Calu3 (cell line): ENCODE measurements at regions of chr1 and their contacts with region 1.

Region 1: DNA sequence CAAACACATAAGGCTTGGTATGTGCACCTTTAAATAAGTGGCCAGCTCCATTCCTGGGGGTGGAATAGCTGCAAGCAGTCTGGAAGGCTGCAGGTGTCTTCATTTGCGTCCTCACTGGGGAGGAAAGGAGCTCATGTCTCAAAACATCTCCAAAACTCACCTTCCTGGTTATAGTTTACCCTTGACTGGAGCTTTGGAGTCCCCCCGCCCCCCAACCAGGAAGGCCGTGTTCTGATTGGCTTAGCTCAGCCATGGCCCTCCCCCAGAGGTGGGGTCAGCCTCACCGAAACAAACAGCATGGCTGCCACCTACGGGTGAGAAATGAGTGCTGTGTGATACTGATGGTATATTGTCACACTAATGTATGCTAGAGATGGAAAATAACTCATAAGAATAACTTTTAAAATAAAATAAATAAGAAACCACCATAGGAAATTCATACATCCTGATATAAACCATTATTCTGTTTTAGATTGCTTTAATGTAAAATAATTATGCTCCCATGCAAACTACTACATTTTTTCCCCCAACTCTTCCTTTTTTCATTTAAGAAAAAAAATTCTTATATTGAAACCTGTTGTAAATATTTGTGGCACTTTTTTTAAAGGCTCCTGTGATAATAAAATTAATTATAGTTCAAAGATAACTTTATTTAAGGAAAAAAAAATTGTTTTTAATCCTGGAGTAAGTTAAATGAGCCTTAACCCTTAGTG is 90.8 kb downstream of the ZP4 start:
- DNase-seq: peak; percentile 94
- H3K4me3 Mint-ChIP-seq: no peak overlapping the region
- H3K27ac Mint-ChIP-seq: no peak overlapping the region
- H3K4me1 Mint-ChIP-seq: peaks cover 6% of the 10 kb centered on the region
- H3K27me3 Mint-ChIP-seq: peaks cover 8% of the 10 kb centered on the region
- CTCF ChIP-seq: peak; percentile 74

Region 2: DNA sequence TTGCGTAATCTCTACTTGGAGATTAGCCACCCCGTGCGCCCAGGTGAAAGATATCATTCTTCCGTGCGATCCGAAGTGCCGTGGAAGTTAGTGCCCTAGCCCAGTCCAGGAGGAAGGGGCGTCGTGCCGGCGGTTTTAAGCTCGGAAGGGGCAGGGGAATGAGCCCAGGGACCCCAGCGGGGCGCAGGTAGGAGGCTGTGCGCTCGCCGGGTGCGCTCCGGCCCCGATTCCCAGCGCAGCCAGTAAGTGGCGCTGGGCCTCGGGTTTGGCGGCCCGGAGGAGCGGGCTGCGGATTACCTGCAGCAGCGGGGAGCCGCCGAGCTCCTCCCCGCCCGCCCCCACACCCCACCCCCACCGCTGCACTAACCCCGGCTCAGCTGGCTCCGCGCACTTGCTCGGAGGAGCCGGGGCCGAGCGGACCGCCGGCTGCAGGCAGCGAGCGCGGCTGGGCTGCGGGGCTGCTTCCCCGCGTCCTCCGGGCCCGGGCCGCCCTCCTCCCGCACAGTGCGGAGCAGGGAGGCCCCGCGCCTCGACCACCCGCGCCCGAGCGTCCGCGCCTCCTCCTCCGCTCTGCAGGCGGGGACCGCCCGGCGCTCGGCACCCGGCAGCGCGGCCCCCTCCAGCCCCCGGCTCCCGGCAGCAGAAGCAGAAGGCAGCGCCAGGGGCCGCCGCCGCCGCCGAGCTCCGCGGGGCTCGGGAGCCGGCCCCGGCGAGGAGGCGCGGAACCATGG is 758.0 kb before region 1 on chr1 and contains the start of gene RYR2:
- CTCF ChIA-PET with region 1: interaction called, 12 read pairs
- intact Hi-C with region 1: no loop called
- DNase-seq: no peak
- H3K4me3 Mint-ChIP-seq: no peak within 1 kb of the TSS
- H3K27ac Mint-ChIP-seq: no peak within 1 kb of the TSS
- H3K4me1 Mint-ChIP-seq: no peaks in the 10 kb centered on the region
- H3K27me3 Mint-ChIP-seq: no peaks in the 10 kb centered on the region
- CTCF ChIP-seq: no peak
- total RNA-seq, gene RYR2: 0.32 and 0.90 TPM in 2 replicates

Region 3: DNA sequence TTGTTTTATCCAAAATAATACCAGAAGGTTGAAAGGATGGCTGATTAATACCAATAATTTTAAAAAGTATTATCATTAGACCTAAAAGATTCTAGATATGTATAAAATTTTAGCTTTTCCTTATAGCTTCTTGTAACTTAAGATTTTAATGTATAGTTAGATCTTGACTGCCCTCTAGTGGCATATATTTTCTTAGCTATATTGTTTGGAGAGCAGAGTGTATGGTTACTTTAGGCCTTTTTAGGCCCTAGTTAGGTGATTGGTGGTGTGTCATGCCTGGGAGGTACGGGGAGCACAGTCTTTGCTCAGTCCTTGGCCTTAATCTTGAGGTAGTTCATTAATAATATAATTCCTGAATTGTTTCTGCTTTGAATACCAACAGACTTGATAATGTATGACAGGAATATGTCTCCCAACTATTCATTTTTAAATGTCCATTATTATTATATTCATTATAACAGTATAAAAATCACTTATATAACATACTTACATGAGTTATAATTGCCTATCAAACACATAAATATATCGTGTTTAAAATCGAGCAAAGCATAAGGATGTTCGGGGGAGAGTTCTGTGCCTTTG is 237.6 kb before region 1 on chr1:
- CTCF ChIA-PET with region 1: interaction called, 8 read pairs
- intact Hi-C with region 1: loop called (anchors 10 kb)
- DNase-seq: peak; percentile 18
- H3K4me3 Mint-ChIP-seq: no peak overlapping the region
- H3K27ac Mint-ChIP-seq: no peak overlapping the region
- H3K4me1 Mint-ChIP-seq: no peaks in the 10 kb centered on the region
- H3K27me3 Mint-ChIP-seq: no peaks in the 10 kb centered on the region
- CTCF ChIP-seq: peak; percentile 76

Region 4: GRCh38 chr1:237672748-237673147 is 127.2 kb before region 1 on chr1:
- CTCF ChIA-PET with region 1: interaction called, 12 read pairs
- intact Hi-C with region 1: loop called (anchors 1 kb)
- DNase-seq: peak; percentile 47
- H3K4me3 Mint-ChIP-seq: no peak overlapping the region
- H3K27ac Mint-ChIP-seq: no peak overlapping the region
- H3K4me1 Mint-ChIP-seq: peaks cover 19% of the 10 kb centered on the region
- H3K27me3 Mint-ChIP-seq: no peaks in the 10 kb centered on the region
- CTCF ChIP-seq: peak; percentile 43

Region 5: GRCh38 chr1:237677979-237678378 is 121.9 kb before region 1 on chr1:
- CTCF ChIA-PET with region 1: interaction called, 12 read pairs
- intact Hi-C with region 1: loop called (anchors 1 kb)
- DNase-seq: peak; percentile 8
- H3K4me3 Mint-ChIP-seq: no peak overlapping the region
- H3K27ac Mint-ChIP-seq: no peak overlapping the region
- H3K4me1 Mint-ChIP-seq: peaks cover 32% of the 10 kb centered on the region
- H3K27me3 Mint-ChIP-seq: no peaks in the 10 kb centered on the region
- CTCF ChIP-seq: no peak

Region 6: GRCh38 chr1:237685551-237685950 is 114.4 kb before region 1 on chr1:
- CTCF ChIA-PET with region 1: interaction called, 11 read pairs
- intact Hi-C with region 1: no loop called
- DNase-seq: peak; percentile 10
- H3K4me3 Mint-ChIP-seq: no peak overlapping the region
- H3K27ac Mint-ChIP-seq: no peak overlapping the region
- H3K4me1 Mint-ChIP-seq: peaks cover 37% of the 10 kb centered on the region
- H3K27me3 Mint-ChIP-seq: no peaks in the 10 kb centered on the region
- CTCF ChIP-seq: no peak

Region 7: GRCh38 chr1:237736372-237737029 is 63.4 kb before region 1 on chr1:
- CTCF ChIA-PET with region 1: interaction called, 5 read pairs
- intact Hi-C with region 1: loop called (anchors 5 kb)
- DNase-seq: peak; percentile 19
- H3K4me3 Mint-ChIP-seq: no peak overlapping the region
- H3K27ac Mint-ChIP-seq: peak overlapping the region; percentile 6
- H3K4me1 Mint-ChIP-seq: peaks cover 27% of the 10 kb centered on the region
- H3K27me3 Mint-ChIP-seq: no peaks in the 10 kb centered on the region
- CTCF ChIP-seq: no peak